ENCODE measurements at regions of chr3 and their contacts with region 1.

Region 1: DNA sequence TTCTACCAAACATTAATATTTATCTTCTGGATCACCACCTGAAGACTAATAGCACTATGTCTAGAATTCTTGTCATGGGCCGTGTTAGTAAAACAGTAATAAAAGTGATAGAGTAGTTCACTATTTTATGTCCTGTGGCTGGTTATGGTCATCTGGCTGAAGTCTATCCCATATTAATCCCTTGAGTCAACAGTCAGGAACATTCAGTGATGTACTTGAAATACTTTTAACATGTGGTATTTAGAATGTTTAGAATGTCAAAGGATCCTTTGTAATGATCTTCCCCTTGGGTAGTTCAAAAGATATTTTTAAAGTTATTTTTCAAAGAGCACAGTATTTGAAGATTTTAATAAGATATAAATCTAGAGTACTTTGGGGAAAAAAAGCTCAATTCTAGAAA is 117.0 kb downstream of the MBNL1 start:
- DNase-seq: no peak
- ATAC-seq: no peak
- H3K4me3 ChIP-seq: no peak overlapping the region
- H3K4me3 Mint-ChIP-seq: no peak overlapping the region
- H3K27ac ChIP-seq: peak overlapping the region in 1 of 2 experiments; percentile 1
- H3K27ac Mint-ChIP-seq: peak overlapping the region; percentile 60
- H3K4me1 ChIP-seq: peaks cover 71% of the 10 kb centered on the region
- H3K4me1 Mint-ChIP-seq: peaks cover 84% of the 10 kb centered on the region
- H3K27me3 ChIP-seq: no peaks in the 10 kb centered on the region
- H3K27me3 Mint-ChIP-seq: no peaks in the 10 kb centered on the region
- CTCF ChIP-seq: no peak

Region 2: DNA sequence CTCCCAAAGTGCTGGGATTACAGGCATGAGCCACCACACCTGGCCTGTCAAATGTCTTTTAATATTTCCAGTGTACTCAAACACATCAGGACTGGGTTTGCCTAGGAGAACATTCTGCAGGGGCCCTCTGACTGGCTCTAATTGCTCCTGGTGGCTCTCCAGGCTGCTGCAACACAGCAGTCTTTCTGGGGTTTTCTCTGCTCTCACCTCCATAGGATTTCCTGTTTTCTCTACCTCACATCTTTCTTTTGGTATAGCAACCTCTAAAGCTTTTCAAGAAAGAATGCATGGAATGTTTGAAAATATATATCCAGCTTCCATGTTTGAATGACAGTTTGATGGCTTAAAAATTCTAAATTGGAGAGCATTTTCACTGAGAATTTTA is 841.6 kb before region 1 on chr3:
- CTCF ChIA-PET with region 1: no interaction called
- POLR2A ChIA-PET with region 1: no interaction called
- intact Hi-C with region 1: no loop called
- DNase-seq: no peak
- ATAC-seq: no peak
- H3K4me3 ChIP-seq: no peak overlapping the region
- H3K4me3 Mint-ChIP-seq: no peak overlapping the region
- H3K27ac ChIP-seq: no peak overlapping the region
- H3K27ac Mint-ChIP-seq: no peak overlapping the region
- H3K4me1 ChIP-seq: no peaks in the 10 kb centered on the region
- H3K4me1 Mint-ChIP-seq: no peaks in the 10 kb centered on the region
- H3K27me3 ChIP-seq: no peaks in the 10 kb centered on the region
- H3K27me3 Mint-ChIP-seq: no peaks in the 10 kb centered on the region
- CTCF ChIP-seq: no peak

Region 3: GRCh38 chr3:151686257-151686656 is 699.5 kb before region 1 on chr3:
- CTCF ChIA-PET with region 1: no interaction called
- POLR2A ChIA-PET with region 1: no interaction called
- intact Hi-C with region 1: no loop called
- DNase-seq: no peak
- ATAC-seq: no peak
- H3K4me3 ChIP-seq: no peak overlapping the region
- H3K4me3 Mint-ChIP-seq: no peak overlapping the region
- H3K27ac ChIP-seq: no peak overlapping the region
- H3K27ac Mint-ChIP-seq: no peak overlapping the region
- H3K4me1 ChIP-seq: no peaks in the 10 kb centered on the region
- H3K4me1 Mint-ChIP-seq: no peaks in the 10 kb centered on the region
- H3K27me3 ChIP-seq: no peaks in the 10 kb centered on the region
- H3K27me3 Mint-ChIP-seq: no peaks in the 10 kb centered on the region
- CTCF ChIP-seq: no peak

Region 4: GRCh38 chr3:152365766-152366593 is 19.8 kb before region 1 on chr3:
- CTCF ChIA-PET with region 1: no interaction called
- POLR2A ChIA-PET with region 1: interaction called, 3 read pairs
- intact Hi-C with region 1: loop called in 1 of 2 experiments (anchors 2 kb)
- DNase-seq: no peak
- ATAC-seq: no peak
- H3K4me3 ChIP-seq: no peak overlapping the region
- H3K4me3 Mint-ChIP-seq: no peak overlapping the region
- H3K27ac ChIP-seq: peak overlapping the region in 1 of 2 experiments; percentile 25
- H3K27ac Mint-ChIP-seq: peak overlapping the region; percentile 25
- H3K4me1 ChIP-seq: peaks cover 35% of the 10 kb centered on the region
- H3K4me1 Mint-ChIP-seq: peaks cover 80% of the 10 kb centered on the region
- H3K27me3 ChIP-seq: no peaks in the 10 kb centered on the region
- H3K27me3 Mint-ChIP-seq: no peaks in the 10 kb centered on the region
- CTCF ChIP-seq: no peak

Region 5: DNA sequence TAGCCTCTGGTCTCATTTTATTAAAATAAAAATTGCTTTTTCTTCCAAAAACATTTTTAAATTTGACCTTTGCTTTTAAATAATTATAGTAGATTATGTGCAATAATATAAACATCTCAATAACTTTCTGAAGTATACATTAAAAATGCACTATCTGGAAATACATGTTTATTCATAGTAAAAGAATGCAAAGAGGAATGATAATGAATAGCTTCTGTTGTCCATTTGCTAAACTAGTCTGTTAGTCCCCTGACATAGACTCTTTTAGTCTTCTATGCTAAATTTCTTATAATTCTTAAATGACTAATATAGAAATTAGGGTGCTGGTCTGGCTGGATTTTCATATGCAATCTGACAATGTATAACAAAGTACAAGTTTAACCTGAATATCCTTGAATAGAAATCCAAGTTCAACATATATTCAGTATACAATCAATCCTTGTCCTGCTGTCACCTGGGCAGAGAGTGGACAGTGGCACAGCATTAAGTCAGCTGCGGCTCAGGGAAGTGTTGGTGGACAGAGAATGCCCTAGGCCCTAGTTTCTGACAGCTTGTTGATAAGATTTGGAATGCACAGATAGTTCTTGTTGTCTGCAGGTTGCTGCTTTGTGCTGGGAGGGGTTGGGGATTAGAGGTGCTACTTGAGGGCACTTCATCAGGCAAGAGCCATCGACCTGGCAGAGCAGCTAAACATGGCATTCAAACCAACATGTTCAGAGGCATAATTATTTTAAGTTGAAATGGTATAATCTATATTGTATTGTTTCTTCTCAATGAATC is 44.7 kb after region 1 on chr3:
- CTCF ChIA-PET with region 1: no interaction called
- POLR2A ChIA-PET with region 1: no interaction called
- intact Hi-C with region 1: no loop called
- DNase-seq: no peak
- ATAC-seq: no peak
- H3K4me3 ChIP-seq: no peak overlapping the region
- H3K4me3 Mint-ChIP-seq: no peak overlapping the region
- H3K27ac ChIP-seq: no peak overlapping the region
- H3K27ac Mint-ChIP-seq: peak overlapping the region; percentile 77
- H3K4me1 ChIP-seq: peaks cover 18% of the 10 kb centered on the region
- H3K4me1 Mint-ChIP-seq: peaks cover 57% of the 10 kb centered on the region
- H3K27me3 ChIP-seq: no peaks in the 10 kb centered on the region
- H3K27me3 Mint-ChIP-seq: no peaks in the 10 kb centered on the region
- CTCF ChIP-seq: no peak

Region 6: DNA sequence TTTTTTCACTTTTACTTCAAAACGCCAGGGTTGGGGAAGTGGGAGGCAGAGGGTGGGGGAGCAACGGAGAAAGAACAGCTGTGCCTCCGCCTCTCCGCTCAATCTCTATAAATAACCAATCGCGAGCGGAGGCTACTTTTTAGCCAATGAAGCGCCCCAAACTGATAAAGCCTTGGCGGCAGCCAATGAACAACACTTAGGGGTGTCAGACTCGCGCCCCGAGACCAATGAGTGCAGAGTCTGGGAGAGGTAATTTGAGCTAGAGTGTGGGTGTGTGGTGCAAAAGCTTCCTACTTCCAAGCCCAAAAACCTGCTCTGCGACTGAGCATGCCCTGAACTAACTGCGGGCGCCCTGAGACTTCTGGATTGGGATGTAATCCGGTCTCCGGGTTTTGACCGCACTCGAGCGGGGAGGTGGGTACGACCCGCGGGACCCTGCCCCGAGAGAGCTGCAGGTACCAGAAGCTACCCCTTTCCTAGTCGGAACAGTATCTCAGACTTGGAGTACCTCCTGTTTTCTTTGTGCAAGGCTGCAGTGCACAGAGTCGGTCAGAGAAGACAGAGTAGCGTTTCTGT is 775.5 kb after region 1 on chr3:
- CTCF ChIA-PET with region 1: no interaction called
- POLR2A ChIA-PET with region 1: no interaction called
- intact Hi-C with region 1: no loop called
- DNase-seq: peak; percentile 79 to 97 (median 90)
- ATAC-seq: peak; percentile 78
- H3K4me3 ChIP-seq: peak overlapping the region; percentile 69 to 75
- H3K4me3 Mint-ChIP-seq: peak overlapping the region; percentile 99
- H3K27ac ChIP-seq: peak overlapping the region; percentile 62 to 74
- H3K27ac Mint-ChIP-seq: peak overlapping the region; percentile 95
- H3K4me1 ChIP-seq: peaks cover 24% of the 10 kb centered on the region
- H3K4me1 Mint-ChIP-seq: peaks cover 34% of the 10 kb centered on the region
- H3K27me3 ChIP-seq: no peaks in the 10 kb centered on the region
- H3K27me3 Mint-ChIP-seq: no peaks in the 10 kb centered on the region
- CTCF ChIP-seq: no peak

Measured in CD8-positive, alpha-beta T cell (primary cell).